ENCODE measurements at regions of chr15 and their contacts with region 1.

Region 1: GRCh38 chr15:100873029-100873677 is 6.5 kb upstream of the ALDH1A3 start:
- DNase-seq: peak; percentile 73
- ATAC-seq: peak; percentile 89

Region 2: GRCh38 chr15:100635406-100636071 is 237.6 kb before region 1 on chr15:
- intact Hi-C with region 1: loop called (anchors 10 kb)
- DNase-seq: no peak
- ATAC-seq: no peak

Measured in sciatic nerve (tissue), 2 donors.